ENCODE measurements at regions of chr19 and their contacts with region 1.

Region 1: GRCh38 chr19:49640113-49640898 is at the start of gene RRAS:
- DNase-seq: peak; percentile 100
- H3K4me3 Mint-ChIP-seq: peak within 1 kb of the TSS; percentile 99
- H3K27ac Mint-ChIP-seq: peak within 1 kb of the TSS; percentile 99
- H3K4me1 Mint-ChIP-seq: peaks cover 43% of the 10 kb centered on the region
- H3K27me3 Mint-ChIP-seq: no peaks in the 10 kb centered on the region
- total RNA-seq, gene RRAS: 7.2 to 7.8 TPM

Region 2: DNA sequence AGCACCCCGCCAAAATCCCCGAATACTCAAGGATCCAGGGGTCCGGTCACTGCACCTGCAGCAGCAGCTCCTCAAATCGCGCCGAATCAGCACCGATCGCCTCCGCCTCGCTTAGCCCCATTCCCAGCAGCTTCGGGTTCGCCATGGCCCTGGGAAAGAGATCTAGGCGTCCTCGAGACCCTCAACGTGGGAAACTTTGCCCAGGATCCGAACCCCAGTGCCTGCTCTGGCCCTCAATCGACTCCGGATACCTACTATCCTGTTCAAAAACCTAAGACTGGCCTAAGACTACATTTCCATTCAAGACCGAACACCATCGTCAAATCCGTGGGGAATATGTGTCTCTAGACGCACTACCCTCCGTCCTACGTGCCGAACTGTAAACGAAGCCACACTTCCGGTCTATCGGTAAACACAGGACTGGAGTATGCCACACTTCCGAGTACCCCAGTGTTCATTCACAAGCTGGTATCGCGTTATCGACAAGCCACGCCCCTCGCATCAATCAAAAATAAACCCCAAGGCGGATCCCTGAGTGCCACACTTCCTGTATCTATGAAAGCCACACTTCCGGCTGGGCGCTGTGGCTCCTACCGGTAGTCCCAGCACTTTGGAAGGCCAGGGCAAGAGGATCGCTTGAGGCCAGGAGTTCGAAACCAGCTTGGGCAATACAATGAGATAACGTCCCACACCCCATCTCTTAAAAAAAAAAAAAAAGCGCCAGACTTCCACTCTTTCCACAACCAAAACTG is 188.7 kb before region 1 on chr19 and contains the start of gene PIH1D1:
- CTCF ChIA-PET with region 1: no interaction called
- intact Hi-C with region 1: loop called (anchors 1 kb)
- DNase-seq: peak; percentile 99
- H3K4me3 Mint-ChIP-seq: peak within 1 kb of the TSS; percentile 100
- H3K27ac Mint-ChIP-seq: peak within 1 kb of the TSS; percentile 100
- H3K4me1 Mint-ChIP-seq: peaks cover 40% of the 10 kb centered on the region
- H3K27me3 Mint-ChIP-seq: no peaks in the 10 kb centered on the region
- total RNA-seq, gene PIH1D1: 80.7 to 84.4 TPM

Region 3: GRCh38 chr19:49528211-49528771 is 112.0 kb before region 1 on chr19:
- CTCF ChIA-PET with region 1: no interaction called
- intact Hi-C with region 1: loop called (anchors 1 kb)
- DNase-seq: no peak
- H3K4me3 Mint-ChIP-seq: peak overlapping the region; percentile 68
- H3K27ac Mint-ChIP-seq: no peak overlapping the region
- H3K4me1 Mint-ChIP-seq: peaks cover 21% of the 10 kb centered on the region
- H3K27me3 Mint-ChIP-seq: no peaks in the 10 kb centered on the region

Region 4: GRCh38 chr19:49665351-49666119 is 25.2 kb after region 1 on chr19 and contains the starts of genes BCL2L12 and IRF3:
- CTCF ChIA-PET with region 1: interaction called, 7 read pairs
- intact Hi-C with region 1: loop called (anchors 1 kb)
- DNase-seq: peak; percentile 100
- H3K4me3 Mint-ChIP-seq: peak within 1 kb of the TSS; percentile 98
- H3K27ac Mint-ChIP-seq: peak within 1 kb of the TSS; percentile 93
- H3K4me1 Mint-ChIP-seq: peaks cover 35% of the 10 kb centered on the region
- H3K27me3 Mint-ChIP-seq: no peaks in the 10 kb centered on the region
- total RNA-seq, gene BCL2L12: 70.5 to 75.6 TPM
- total RNA-seq, gene IRF3: 85.2 to 97.8 TPM

Region 5: DNA sequence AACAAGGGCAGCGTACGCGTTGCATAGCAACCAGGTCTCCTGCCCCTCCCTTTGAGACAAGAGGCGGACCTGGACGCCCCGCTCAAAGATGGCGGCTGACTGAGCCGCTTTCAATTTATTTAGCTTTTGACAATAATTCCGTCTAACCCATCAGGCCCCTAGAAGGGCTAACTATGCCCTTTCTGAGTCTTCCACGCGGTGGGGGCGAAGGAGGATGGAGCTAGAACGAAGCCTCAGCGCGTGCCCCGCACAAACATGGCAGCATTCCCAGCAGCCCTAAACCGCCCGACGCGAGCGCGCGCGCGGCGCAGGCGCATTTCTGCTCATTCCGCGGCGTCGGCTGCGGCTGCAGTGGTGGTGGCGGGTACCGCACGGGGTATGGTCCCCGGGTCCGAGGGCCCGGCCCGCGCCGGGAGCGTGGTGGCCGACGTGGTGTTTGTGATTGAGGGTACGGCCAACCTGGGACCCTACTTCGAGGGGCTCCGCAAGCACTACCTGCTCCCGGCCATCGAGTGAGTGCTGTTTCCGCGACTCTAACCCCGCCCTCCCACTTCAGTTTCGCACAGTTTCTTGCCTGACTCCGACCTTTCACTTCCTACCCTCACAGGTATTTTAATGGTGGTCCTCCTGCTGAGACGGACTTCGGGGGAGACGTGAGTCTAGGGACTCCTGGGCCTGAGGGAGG is 177.8 kb after region 1 on chr19 and contains the start of gene MED25:
- CTCF ChIA-PET with region 1: no interaction called
- intact Hi-C with region 1: loop called (anchors 1 kb)
- DNase-seq: peak; percentile 87
- H3K4me3 Mint-ChIP-seq: peak within 1 kb of the TSS; percentile 92
- H3K27ac Mint-ChIP-seq: peak within 1 kb of the TSS; percentile 99
- H3K4me1 Mint-ChIP-seq: peaks cover 16% of the 10 kb centered on the region
- H3K27me3 Mint-ChIP-seq: no peaks in the 10 kb centered on the region
- total RNA-seq, gene MED25: 32.4 to 39.2 TPM

Region 6: DNA sequence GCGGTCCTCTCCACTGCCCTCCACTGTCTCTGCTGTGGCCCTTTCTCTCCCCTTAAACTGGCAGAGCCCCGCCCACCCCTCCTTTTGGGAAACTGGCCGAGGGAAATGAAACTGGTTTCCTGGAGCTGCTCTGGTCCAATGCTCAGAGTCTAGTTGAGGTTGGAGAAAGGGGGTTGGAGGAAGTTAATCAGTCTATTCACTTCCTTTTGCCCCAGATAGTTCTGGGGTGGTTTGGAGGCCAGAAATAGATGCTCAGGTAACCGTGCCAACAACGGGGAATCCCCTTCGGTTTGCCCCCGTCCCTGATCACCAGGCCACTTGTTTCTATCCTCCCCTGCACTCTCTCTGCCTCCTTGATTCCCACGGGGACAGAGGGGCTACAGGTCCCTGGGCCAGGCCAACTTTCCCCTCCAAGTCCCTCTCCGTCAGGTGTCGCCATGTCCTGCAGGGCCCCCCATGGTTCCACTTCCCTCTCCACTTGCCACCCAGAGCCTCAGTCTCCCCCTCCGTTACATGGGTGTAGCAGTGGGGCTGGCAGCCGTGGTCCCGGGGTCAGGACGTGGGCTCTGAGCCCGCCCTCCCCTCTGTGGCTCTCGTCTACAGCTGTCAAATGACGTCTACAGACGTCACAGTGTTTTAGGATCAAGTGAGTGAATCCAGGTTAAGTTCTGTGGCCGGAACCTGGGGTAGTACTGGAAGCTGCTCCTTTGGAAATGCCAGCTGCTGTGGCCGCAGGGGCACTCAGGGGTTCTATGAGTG is 256.7 kb after region 1 on chr19 and contains the start of gene IL4I1:
- CTCF ChIA-PET with region 1: no interaction called
- intact Hi-C with region 1: loop called (anchors 1 kb)
- DNase-seq: peak; percentile 85
- H3K4me3 Mint-ChIP-seq: peak within 1 kb of the TSS; percentile 67
- H3K27ac Mint-ChIP-seq: peak within 1 kb of the TSS; percentile 97
- H3K4me1 Mint-ChIP-seq: peaks cover 31% of the 10 kb centered on the region
- H3K27me3 Mint-ChIP-seq: no peaks in the 10 kb centered on the region
- total RNA-seq, gene IL4I1: 7.2 to 7.5 TPM